ENCODE measurements at regions of chr9 and their contacts with region 1.

Region 1: DNA sequence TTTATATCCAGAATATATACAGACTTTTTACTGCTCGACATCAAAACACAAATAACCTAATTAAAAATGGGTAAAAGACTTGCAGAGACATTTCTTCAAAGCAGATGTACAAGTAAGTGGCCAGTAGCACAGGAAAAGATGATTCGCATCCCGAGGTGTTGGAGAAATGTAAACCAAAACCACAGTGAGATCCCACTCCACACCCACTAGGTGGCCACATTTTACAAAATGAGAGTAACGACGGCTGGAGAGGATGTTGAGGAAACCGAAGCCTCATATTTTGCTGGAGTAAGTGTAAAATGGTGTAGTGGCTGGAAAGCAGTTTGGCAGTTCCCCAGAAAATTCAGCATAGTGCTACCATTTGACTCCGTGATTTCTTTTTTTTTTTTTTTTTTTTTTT is 21.2 kb upstream of the GBGT1 start:
- DNase-seq: peak; percentile 38
- H3K4me3 Mint-ChIP-seq: no peak overlapping the region
- H3K27ac Mint-ChIP-seq: no peak overlapping the region
- H3K4me1 Mint-ChIP-seq: no peaks in the 10 kb centered on the region
- H3K27me3 Mint-ChIP-seq: peaks cover 51% of the 10 kb centered on the region
- CTCF ChIP-seq: peak; percentile 35

Region 2: GRCh38 chr9:132597073-132597775 is 587.7 kb before region 1 on chr9:
- CTCF ChIA-PET with region 1: no interaction called
- intact Hi-C with region 1: no loop called
- DNase-seq: no peak
- H3K4me3 Mint-ChIP-seq: no peak overlapping the region
- H3K27ac Mint-ChIP-seq: no peak overlapping the region
- H3K4me1 Mint-ChIP-seq: peaks cover 8% of the 10 kb centered on the region
- H3K27me3 Mint-ChIP-seq: no peaks in the 10 kb centered on the region
- CTCF ChIP-seq: no peak

Region 3: DNA sequence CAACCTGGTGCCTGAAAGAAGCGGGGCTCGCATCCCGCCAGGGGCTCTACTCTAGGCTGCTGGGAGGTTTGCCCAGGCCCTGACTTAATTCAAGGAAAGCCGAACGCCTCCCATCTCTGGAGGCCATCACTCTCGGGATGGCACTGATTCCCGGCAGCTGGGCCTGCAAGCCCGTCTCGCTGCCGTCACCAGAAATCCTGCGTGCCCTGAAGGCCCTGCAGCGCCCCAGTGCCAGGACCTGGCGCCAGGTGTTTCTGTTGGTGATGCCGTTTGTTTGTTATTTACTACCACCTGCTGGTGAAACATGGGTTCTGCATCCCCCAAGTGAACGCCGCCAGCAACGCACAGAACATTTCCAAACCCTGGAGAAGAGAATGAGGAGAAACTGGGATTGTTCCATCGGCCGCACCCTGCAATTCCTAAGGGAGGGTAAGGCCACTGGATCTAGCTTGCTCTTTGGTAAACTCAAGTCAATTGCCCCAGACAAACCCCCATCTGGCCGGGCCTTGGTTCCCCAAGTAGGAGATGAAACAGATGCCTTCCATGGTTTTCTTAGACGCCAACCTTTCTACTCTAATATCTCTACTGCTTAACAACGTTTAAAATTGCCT is 384.8 kb before region 1 on chr9:
- CTCF ChIA-PET with region 1: no interaction called
- intact Hi-C with region 1: no loop called
- DNase-seq: peak; percentile 57
- H3K4me3 Mint-ChIP-seq: no peak overlapping the region
- H3K27ac Mint-ChIP-seq: no peak overlapping the region
- H3K4me1 Mint-ChIP-seq: peaks cover 16% of the 10 kb centered on the region
- H3K27me3 Mint-ChIP-seq: peaks cover 7% of the 10 kb centered on the region
- CTCF ChIP-seq: peak; percentile 70

Region 4: GRCh38 chr9:133115448-133116345 is 69.3 kb before region 1 on chr9:
- CTCF ChIA-PET with region 1: no interaction called
- intact Hi-C with region 1: no loop called
- DNase-seq: no peak
- H3K4me3 Mint-ChIP-seq: no peak overlapping the region
- H3K27ac Mint-ChIP-seq: no peak overlapping the region
- H3K4me1 Mint-ChIP-seq: no peaks in the 10 kb centered on the region
- H3K27me3 Mint-ChIP-seq: no peaks in the 10 kb centered on the region
- CTCF ChIP-seq: no peak

Region 5: DNA sequence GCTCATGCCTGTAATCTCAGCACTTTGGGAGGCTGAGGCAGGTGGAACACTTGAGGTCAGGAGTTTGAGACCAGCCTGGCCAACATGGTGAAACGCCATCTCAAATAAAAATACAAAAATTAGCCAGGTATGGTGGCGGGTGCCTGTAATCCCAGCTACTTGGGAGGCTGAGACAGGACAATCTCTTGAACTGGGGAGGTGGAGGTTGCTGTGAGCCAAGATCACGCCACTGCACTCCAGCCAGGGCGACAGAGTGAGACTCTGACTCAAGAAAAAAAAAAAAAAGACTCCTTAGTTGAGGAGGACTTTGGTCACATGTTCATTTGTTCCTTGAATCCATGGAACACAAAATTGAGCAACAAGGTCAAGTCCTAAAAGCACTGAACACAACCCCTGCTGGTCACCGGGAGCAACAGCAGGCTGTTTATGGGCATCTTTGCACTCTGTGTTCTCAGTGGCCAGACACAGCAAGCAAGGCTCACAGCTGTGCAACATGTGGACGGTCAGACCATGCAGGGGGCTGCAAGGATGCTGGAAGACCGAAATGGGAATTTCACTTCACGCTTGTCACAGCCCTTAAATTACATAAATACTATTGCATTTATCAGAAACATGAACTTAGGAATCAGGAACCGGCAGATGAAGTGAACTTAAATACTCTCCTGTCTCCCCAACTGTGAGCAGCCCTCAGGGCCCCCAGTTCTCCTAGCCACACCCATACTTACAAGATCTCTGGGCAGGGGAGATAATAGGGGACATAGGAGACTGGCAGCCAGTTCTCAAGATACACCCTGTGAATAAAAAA is 24.0 kb before region 1 on chr9:
- CTCF ChIA-PET with region 1: no interaction called
- intact Hi-C with region 1: no loop called
- DNase-seq: peak; percentile 48
- H3K4me3 Mint-ChIP-seq: no peak overlapping the region
- H3K27ac Mint-ChIP-seq: no peak overlapping the region
- H3K4me1 Mint-ChIP-seq: no peaks in the 10 kb centered on the region
- H3K27me3 Mint-ChIP-seq: peaks cover 28% of the 10 kb centered on the region
- CTCF ChIP-seq: peak; percentile 24

Region 6: GRCh38 chr9:133238851-133239532 is 54.0 kb after region 1 on chr9:
- CTCF ChIA-PET with region 1: interaction called, 19 read pairs
- intact Hi-C with region 1: loop called (anchors 2 kb)
- DNase-seq: peak; percentile 76
- H3K4me3 Mint-ChIP-seq: peak overlapping the region; percentile 43
- H3K27ac Mint-ChIP-seq: no peak overlapping the region
- H3K4me1 Mint-ChIP-seq: no peaks in the 10 kb centered on the region
- H3K27me3 Mint-ChIP-seq: peaks cover 15% of the 10 kb centered on the region
- CTCF ChIP-seq: peak; percentile 74

Region 7: GRCh38 chr9:133275105-133276000 is 90.4 kb after region 1 on chr9 and contains the start of gene ABO:
- CTCF ChIA-PET with region 1: interaction called, 4 read pairs
- intact Hi-C with region 1: loop called (anchors 5 kb)
- DNase-seq: peak; percentile 56
- H3K4me3 Mint-ChIP-seq: peak within 1 kb of the TSS; percentile 24
- H3K27ac Mint-ChIP-seq: no peak within 1 kb of the TSS
- H3K4me1 Mint-ChIP-seq: no peaks in the 10 kb centered on the region
- H3K27me3 Mint-ChIP-seq: peaks cover 45% of the 10 kb centered on the region
- CTCF ChIP-seq: peak; percentile 33
- total RNA-seq, gene ABO: 2.8 and 3.3 TPM in 2 replicates

Region 8: GRCh38 chr9:133327834-133328484 is 143.0 kb after region 1 on chr9:
- CTCF ChIA-PET with region 1: interaction called, 46 read pairs
- intact Hi-C with region 1: loop called (anchors 1 kb)
- DNase-seq: no peak
- H3K4me3 Mint-ChIP-seq: no peak overlapping the region
- H3K27ac Mint-ChIP-seq: no peak overlapping the region
- H3K4me1 Mint-ChIP-seq: peaks cover 26% of the 10 kb centered on the region
- H3K27me3 Mint-ChIP-seq: peaks cover 16% of the 10 kb centered on the region
- CTCF ChIP-seq: no peak

Region 9: GRCh38 chr9:133334161-133334560 is 149.2 kb after region 1 on chr9:
- CTCF ChIA-PET with region 1: interaction called, 46 read pairs
- intact Hi-C with region 1: loop called (anchors 1 kb)
- DNase-seq: no peak
- H3K4me3 Mint-ChIP-seq: peak overlapping the region; percentile 90
- H3K27ac Mint-ChIP-seq: no peak overlapping the region
- H3K4me1 Mint-ChIP-seq: peaks cover 27% of the 10 kb centered on the region
- H3K27me3 Mint-ChIP-seq: no peaks in the 10 kb centered on the region
- CTCF ChIP-seq: no peak

Region 10: DNA sequence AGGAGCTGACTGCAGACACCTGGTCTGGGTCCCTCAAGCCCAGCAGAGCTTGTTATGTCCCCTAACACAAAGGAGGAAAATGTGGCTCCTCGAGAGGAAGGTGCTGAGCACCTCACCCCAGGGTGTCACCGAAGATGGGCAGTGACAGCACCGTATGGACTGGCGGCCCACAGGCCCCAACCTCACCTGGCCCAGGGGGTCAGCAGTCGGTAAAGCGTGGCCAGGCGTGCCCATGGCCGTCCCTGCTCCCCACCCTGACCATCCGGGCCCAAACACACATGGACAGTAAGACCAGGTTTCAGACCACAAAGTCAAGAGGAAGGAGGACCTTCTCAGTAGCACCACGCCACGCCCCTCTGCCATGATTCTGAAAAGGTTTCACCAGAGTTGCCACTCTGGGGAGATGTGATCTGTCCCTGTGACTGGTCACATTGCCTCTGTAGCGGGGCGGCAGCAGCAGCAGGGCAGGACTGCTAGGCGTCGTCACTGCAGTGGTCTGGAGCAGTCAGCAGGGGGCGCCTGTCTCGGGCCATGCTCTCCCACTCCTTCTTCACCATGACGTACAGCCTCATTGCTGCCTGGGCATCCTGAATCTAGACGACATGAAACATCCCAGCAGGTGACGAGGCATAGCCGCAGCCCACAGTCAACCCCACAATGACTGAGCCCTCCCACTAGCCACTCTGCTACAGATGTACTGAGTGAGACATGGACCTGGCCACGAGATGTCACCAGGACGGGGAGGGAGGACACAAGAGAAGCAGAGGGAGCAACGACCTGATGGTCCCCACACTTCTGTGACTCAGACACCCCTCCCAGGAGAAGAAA is 221.7 kb after region 1 on chr9:
- CTCF ChIA-PET with region 1: no interaction called
- intact Hi-C with region 1: loop called (anchors 5 kb)
- DNase-seq: peak; percentile 74
- H3K4me3 Mint-ChIP-seq: no peak overlapping the region
- H3K27ac Mint-ChIP-seq: no peak overlapping the region
- H3K4me1 Mint-ChIP-seq: no peaks in the 10 kb centered on the region
- H3K27me3 Mint-ChIP-seq: no peaks in the 10 kb centered on the region
- CTCF ChIP-seq: no peak

Region 11: GRCh38 chr9:133485361-133486260 is 300.6 kb after region 1 on chr9:
- CTCF ChIA-PET with region 1: interaction called, 4 read pairs
- intact Hi-C with region 1: loop called (anchors 5 kb)
- DNase-seq: no peak
- H3K4me3 Mint-ChIP-seq: no peak overlapping the region
- H3K27ac Mint-ChIP-seq: no peak overlapping the region
- H3K4me1 Mint-ChIP-seq: no peaks in the 10 kb centered on the region
- H3K27me3 Mint-ChIP-seq: peaks cover 18% of the 10 kb centered on the region
- CTCF ChIP-seq: no peak